Upper lobe of right lung (tissue), 1 donor: ENCODE measurements at regions of chr12 and their contacts with region 1.

Region 1: DNA sequence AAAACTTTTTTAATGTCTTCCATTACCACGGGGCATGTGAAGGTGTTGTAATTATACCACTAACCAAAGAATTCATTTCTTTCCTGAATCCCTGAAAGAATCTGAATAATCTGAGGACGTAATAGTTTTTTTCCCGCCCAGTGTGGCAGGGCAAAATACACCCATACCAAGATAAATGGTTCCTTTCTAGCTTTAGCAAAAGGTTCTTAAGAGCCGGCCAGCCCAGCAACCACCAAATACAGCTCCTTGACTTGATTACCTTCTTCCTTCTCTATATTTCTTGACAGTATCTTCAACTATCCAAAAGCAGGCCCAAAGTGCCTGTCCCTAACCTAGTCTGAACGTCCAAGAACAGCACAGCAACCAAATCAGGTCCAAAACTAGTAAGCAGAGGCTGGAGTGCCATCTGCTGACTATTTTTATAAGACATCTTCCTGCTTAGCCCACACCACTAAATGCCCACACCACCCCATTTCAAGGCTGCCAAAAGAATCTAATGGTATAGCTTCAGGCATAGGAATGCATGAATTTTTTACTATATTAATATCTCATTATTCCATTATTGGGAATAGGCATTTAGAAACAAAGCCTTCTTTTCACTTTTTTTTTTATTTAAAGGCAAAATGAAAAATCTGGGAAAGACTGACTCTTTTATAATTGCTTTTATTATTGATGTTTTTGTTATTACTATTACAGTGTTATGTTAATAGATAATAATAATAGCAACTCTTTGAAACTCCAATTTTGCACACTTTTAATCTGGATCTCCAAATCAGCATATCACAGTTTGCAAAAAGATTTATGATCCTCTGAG is 524.4 kb downstream of the MED13L start:
- DNase-seq: no peak
- ATAC-seq: peak; percentile 85
- H3K4me3 ChIP-seq: no peak overlapping the region
- H3K27ac ChIP-seq: no peak overlapping the region
- H3K4me1 ChIP-seq: peaks cover 12% of the 10 kb centered on the region
- H3K27me3 ChIP-seq: peaks cover 10% of the 10 kb centered on the region
- CTCF ChIP-seq: peak; percentile 64

Region 2: DNA sequence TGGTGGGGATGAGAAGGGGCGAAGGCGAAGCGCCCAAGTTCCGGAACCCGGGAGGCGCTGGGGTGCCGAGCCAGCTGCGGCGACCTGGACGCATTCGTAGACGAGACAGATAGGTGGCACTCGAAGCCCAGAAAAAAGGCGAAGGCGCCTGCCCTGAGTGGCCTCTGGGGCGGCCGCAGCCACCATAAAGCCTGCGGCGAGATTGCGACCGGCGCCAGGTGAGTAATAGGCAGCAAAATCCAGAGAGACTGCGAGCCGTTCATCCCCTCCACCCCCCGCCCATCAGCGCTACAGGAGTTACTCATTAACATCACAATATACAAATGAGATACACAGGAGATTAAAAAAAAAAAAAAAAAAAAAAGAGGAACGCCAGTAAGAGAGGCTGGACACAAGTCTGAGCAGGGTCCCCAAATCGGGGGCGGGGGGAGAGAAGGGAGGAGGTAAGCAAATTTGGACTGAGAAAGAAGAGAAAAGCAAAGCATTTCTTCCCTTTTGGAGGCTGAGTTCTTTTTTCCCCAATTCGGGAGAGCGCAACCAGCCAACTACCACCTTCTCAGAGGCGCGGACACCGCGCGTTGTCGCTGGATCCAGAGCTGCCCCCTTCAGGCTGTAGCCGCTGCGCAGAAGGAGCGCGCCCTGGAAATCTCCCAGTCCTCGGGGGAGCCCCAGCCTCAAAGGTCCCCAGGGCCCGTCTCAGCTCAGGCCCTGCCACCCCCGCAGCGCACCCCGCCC is 1084.8 kb before region 1 on chr12:
- intact Hi-C with region 1: loop called (anchors 5 kb)
- DNase-seq: peak; percentile 84
- ATAC-seq: peak; percentile 81
- H3K4me3 ChIP-seq: peak overlapping the region; percentile 45
- H3K27ac ChIP-seq: peak overlapping the region; percentile 79
- H3K4me1 ChIP-seq: peaks cover 9% of the 10 kb centered on the region
- H3K27me3 ChIP-seq: peaks cover 67% of the 10 kb centered on the region
- CTCF ChIP-seq: peak; percentile 48

Region 3: GRCh38 chr12:114952573-114953271 is 800.4 kb before region 1 on chr12:
- intact Hi-C with region 1: no loop called
- DNase-seq: no peak
- ATAC-seq: peak; percentile 60
- H3K4me3 ChIP-seq: no peak overlapping the region
- H3K27ac ChIP-seq: peak overlapping the region; percentile 60
- H3K4me1 ChIP-seq: no peaks in the 10 kb centered on the region
- H3K27me3 ChIP-seq: no peaks in the 10 kb centered on the region
- CTCF ChIP-seq: no peak

Region 4: GRCh38 chr12:115572440-115572839 is 180.7 kb before region 1 on chr12:
- intact Hi-C with region 1: no loop called
- DNase-seq: no peak
- ATAC-seq: no peak
- H3K4me3 ChIP-seq: no peak overlapping the region
- H3K27ac ChIP-seq: no peak overlapping the region
- H3K4me1 ChIP-seq: no peaks in the 10 kb centered on the region
- H3K27me3 ChIP-seq: no peaks in the 10 kb centered on the region
- CTCF ChIP-seq: no peak

Region 5: GRCh38 chr12:115916910-115917668 is 164.0 kb after region 1 on chr12:
- intact Hi-C with region 1: loop called (anchors 10 kb)
- DNase-seq: peak; percentile 86
- ATAC-seq: peak; percentile 97
- H3K4me3 ChIP-seq: no peak overlapping the region
- H3K27ac ChIP-seq: no peak overlapping the region
- H3K4me1 ChIP-seq: peaks cover 4% of the 10 kb centered on the region
- H3K27me3 ChIP-seq: peaks cover 19% of the 10 kb centered on the region
- CTCF ChIP-seq: peak; percentile 98